H1 (cell line): ENCODE measurements at regions of chr4 and their contacts with region 1.

Region 1: DNA sequence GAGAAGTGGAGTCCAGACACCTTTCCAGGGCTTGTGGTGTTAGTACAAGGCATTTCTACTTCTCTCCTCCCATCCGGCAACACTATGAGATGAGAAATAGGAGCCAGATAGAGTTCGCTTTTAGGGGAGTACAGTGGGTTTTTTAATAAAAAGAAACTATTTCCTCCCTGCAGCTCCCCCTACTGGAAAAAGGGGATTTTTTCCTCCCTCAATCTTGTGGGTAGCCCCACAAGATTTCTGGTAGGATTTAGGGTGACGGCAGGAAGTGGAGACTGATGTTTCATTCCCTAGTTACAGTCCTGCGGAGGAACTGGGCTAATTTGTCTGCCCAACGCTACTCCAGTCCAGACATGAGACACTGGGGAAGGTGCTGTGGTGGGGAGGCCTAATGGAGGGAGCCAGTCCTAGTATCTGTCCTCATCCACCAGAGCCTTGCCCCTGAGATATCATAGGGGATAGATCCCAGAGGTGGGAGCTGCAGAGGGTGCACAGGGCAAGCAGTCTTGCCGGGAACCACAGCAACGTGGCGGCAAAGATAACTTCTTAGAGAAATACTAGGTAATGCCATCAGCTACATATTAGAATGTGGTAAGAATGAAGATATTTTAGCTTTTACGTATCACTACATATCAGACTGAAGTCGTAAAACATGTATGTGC is 45.5 kb upstream of the PRKG2 start:
- DNase-seq: peak; percentile 7 to 59
- H3K4me3 ChIP-seq: no peak overlapping the region
- H3K27ac ChIP-seq: no peak overlapping the region
- H3K4me1 ChIP-seq: no peaks in the 10 kb centered on the region
- H3K27me3 ChIP-seq: no peaks in the 10 kb centered on the region
- CTCF ChIP-seq: peak in 2 of 3 experiments; percentile 46 to 55; a peak in 2 of 4 replicates
- EP300 ChIP-seq: no peak
- POLR2A ChIP-seq: no peak
- RAD21 ChIP-seq: peak; percentile 48 to 53

Region 2: DNA sequence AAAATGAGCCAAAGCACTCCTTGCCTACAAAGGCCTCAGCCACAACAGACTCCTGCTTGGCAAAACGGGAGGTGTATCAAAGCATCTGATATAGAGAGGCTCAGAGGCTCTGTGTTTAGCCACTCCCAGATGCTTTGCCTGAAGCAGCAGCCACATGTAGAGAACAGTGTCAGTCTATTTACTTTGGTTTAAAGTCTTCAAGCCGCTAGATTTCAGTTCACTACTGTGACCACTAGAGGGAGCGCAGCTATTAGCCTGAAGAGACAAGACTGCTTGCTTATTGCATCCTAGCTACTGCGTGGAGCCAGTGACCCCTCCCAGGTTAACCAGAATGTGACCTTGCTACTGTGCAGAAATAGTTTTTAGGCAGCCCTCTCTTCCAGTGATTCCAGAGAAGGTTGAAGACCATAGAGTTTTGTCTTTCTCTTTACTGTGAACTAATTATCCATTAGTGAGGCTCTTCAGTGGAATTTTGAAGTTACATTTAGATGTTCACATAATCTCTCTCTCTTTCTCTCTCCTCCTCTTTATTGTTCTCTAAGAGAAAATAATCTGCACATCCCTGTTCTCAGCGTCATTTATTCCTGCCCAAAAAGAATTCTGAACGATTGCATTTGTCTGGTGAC is 190.8 kb before region 1 on chr4:
- CTCF ChIA-PET with region 1: interaction called, 28 read pairs
- POLR2A ChIA-PET with region 1: interaction called, 5 read pairs
- DNase-seq: peak; percentile 66 to 70
- H3K4me3 ChIP-seq: no peak overlapping the region
- H3K27ac ChIP-seq: no peak overlapping the region
- H3K4me1 ChIP-seq: no peaks in the 10 kb centered on the region
- H3K27me3 ChIP-seq: no peaks in the 10 kb centered on the region
- CTCF ChIP-seq: peak; percentile 23 to 94 (median 92)
- EP300 ChIP-seq: no peak
- POLR2A ChIP-seq: no peak
- RAD21 ChIP-seq: peak; percentile 95 to 96

Region 3: GRCh38 chr4:81196126-81196650 is 64.4 kb before region 1 on chr4:
- CTCF ChIA-PET with region 1: interaction called, 10 read pairs
- POLR2A ChIA-PET with region 1: no interaction called
- DNase-seq: no peak
- H3K4me3 ChIP-seq: no peak overlapping the region
- H3K27ac ChIP-seq: no peak overlapping the region
- H3K4me1 ChIP-seq: no peaks in the 10 kb centered on the region
- H3K27me3 ChIP-seq: no peaks in the 10 kb centered on the region
- CTCF ChIP-seq: no peak
- EP300 ChIP-seq: no peak
- POLR2A ChIP-seq: no peak
- RAD21 ChIP-seq: no peak

Region 4: GRCh38 chr4:81245218-81246009 is 15.2 kb before region 1 on chr4:
- CTCF ChIA-PET with region 1: interaction called, 18 read pairs
- POLR2A ChIA-PET with region 1: no interaction called
- DNase-seq: no peak
- H3K4me3 ChIP-seq: no peak overlapping the region
- H3K27ac ChIP-seq: no peak overlapping the region
- H3K4me1 ChIP-seq: no peaks in the 10 kb centered on the region
- H3K27me3 ChIP-seq: no peaks in the 10 kb centered on the region
- CTCF ChIP-seq: no peak
- EP300 ChIP-seq: no peak
- POLR2A ChIP-seq: no peak
- RAD21 ChIP-seq: no peak

Region 5: DNA sequence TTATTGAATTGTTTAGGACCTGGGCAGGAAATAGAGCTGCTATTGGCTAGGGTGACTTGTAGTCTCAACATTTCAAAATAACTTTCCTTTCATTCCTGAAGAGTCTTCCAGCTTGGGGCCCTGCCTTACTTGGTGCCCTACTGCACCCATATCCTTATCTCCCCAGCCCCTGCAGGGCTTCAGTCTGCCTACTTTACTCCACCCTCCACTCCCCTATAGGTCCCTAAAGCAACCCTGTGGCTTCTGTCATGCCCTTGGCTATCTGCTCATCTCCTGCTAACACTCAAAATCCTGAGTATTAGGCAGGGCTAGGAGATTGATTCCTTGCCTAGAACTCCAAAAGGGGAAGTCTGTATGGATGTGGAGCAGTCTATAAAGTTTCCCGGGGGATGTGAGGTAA is 12.1 kb after region 1 on chr4:
- CTCF ChIA-PET with region 1: interaction called, 23 read pairs
- POLR2A ChIA-PET with region 1: no interaction called
- DNase-seq: no peak
- H3K4me3 ChIP-seq: no peak overlapping the region
- H3K27ac ChIP-seq: no peak overlapping the region
- H3K4me1 ChIP-seq: no peaks in the 10 kb centered on the region
- H3K27me3 ChIP-seq: no peaks in the 10 kb centered on the region
- CTCF ChIP-seq: no peak
- EP300 ChIP-seq: no peak
- POLR2A ChIP-seq: no peak
- RAD21 ChIP-seq: no peak

Region 6: GRCh38 chr4:81335122-81335912 is 74.7 kb after region 1 on chr4:
- CTCF ChIA-PET with region 1: interaction called, 11 read pairs
- POLR2A ChIA-PET with region 1: no interaction called
- DNase-seq: no peak
- H3K4me3 ChIP-seq: no peak overlapping the region
- H3K27ac ChIP-seq: no peak overlapping the region
- H3K4me1 ChIP-seq: no peaks in the 10 kb centered on the region
- H3K27me3 ChIP-seq: no peaks in the 10 kb centered on the region
- CTCF ChIP-seq: no peak
- EP300 ChIP-seq: no peak
- POLR2A ChIP-seq: no peak
- RAD21 ChIP-seq: no peak

Region 7: DNA sequence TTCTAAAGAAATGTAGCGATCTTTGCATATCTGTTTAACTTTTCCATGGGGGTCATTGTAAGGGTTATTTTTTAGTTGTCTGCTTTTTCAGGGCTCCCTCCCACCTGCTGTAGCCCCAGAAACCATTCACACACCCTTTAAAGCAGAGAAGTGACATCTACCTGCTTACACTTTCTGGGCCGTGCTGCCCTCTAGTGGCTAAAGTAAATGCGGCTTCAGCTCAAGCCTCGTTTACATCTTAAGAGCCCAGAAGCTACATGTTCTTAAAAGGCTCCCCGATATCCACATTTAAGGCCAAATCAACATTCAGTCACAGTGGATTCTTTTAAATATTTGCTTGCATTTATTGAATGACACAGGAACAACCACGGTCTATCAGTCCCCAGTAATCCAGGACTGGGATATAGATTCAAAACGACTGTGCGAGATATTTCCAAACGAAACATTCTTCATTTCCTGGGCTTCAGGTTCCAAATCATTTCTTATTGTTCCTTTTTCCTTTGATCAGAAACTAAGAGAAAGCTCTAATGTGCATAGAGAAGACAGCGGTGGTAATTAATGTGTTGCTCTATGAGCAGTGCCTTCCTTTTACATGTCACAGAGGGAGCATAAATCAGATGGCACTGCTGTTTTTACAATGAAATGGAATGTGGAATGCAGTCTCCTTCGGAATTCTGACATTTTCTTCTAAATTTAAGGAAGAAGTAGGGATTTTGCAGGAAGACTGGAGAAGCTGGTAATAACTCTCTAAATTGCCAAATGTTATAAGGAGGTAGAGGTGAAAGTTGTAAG is 91.3 kb after region 1 on chr4:
- CTCF ChIA-PET with region 1: interaction called, 10 read pairs
- POLR2A ChIA-PET with region 1: no interaction called
- DNase-seq: peak; percentile 58 to 87
- H3K4me3 ChIP-seq: no peak overlapping the region
- H3K27ac ChIP-seq: no peak overlapping the region
- H3K4me1 ChIP-seq: no peaks in the 10 kb centered on the region
- H3K27me3 ChIP-seq: no peaks in the 10 kb centered on the region; a peak in 1 of 7 replicates
- CTCF ChIP-seq: peak; percentile 48 to 87 (median 86)
- EP300 ChIP-seq: no peak
- POLR2A ChIP-seq: no peak
- RAD21 ChIP-seq: peak; percentile 87 to 90